ENCODE measurements at regions of chr5 and their contacts with region 1.

Region 1: GRCh38 chr5:42950440-42951292 is 89.5 kb downstream of the ANXA2R start:
- DNase-seq: peak; percentile 72
- ATAC-seq: peak; percentile 88 to 91
- H3K4me3 ChIP-seq: peak overlapping the region; percentile 56
- H3K27ac ChIP-seq: peak overlapping the region; percentile 94
- H3K4me1 ChIP-seq: peaks cover 32% of the 10 kb centered on the region
- H3K27me3 ChIP-seq: peaks cover 87% of the 10 kb centered on the region
- CTCF ChIP-seq: no peak

Region 2: GRCh38 chr5:42756606-42757601 is 193.8 kb before region 1 on chr5 and contains the start of gene CCDC152:
- intact Hi-C with region 1: no loop called
- DNase-seq: no peak
- ATAC-seq: peak; percentile 16 to 51
- H3K4me3 ChIP-seq: peak within 1 kb of the TSS; percentile 44
- H3K27ac ChIP-seq: no peak within 1 kb of the TSS
- H3K4me1 ChIP-seq: peaks cover 7% of the 10 kb centered on the region
- H3K27me3 ChIP-seq: peaks cover 3% of the 10 kb centered on the region
- CTCF ChIP-seq: no peak
- total RNA-seq, gene CCDC152: 1.3 TPM

Region 3: DNA sequence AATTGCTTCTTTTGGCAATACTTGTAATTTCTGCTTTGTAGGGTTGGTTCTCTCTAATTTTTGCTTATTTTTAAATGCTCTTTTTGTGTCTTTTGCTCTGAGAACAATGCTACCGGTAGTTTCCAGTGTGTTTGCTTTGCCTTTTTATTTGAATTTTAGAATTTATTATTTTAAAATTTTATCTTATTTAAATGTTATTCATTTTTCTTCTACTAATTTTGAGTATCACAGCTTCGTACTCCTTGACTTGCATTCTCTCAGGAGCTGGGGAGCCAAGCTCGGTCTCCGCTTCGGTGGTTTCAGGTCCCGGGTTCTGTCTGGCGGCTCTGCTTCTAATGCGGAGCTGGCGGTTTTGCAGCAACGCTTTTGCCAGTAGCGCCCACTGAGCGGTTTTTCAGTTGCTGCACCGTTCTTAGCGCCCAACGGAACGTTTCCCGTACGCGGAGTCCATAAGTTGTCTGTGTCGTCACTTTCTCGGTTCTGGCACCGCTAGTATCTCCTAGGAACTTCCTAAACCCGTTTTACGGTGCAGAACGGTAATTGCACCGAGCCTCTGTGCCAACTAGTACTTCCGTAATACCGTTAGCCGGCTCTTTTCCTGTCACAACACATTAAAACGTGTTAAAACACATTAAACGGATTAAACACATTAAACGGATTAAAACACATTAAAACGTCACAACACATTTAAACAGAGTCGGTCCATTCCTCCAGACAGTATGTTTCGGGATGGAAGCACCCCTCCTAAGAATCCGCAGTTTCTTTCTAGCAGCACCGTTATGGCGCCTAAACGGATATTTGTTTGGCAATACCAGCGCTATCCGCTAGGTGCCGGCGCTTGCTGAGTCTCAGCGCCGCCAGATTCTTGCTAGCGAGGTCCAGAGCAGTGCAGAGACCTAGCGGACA is 43.8 kb after region 1 on chr5:
- intact Hi-C with region 1: loop called (anchors 5 kb)
- DNase-seq: peak; percentile 89
- ATAC-seq: peak; percentile 84 to 87
- H3K4me3 ChIP-seq: peak overlapping the region; percentile 58
- H3K27ac ChIP-seq: peak overlapping the region; percentile 99
- H3K4me1 ChIP-seq: peaks cover 17% of the 10 kb centered on the region
- H3K27me3 ChIP-seq: peaks cover 86% of the 10 kb centered on the region
- CTCF ChIP-seq: peak; percentile 88

Region 4: GRCh38 chr5:43066799-43067741 is 116.4 kb after region 1 on chr5:
- intact Hi-C with region 1: no loop called
- DNase-seq: peak; percentile 88
- ATAC-seq: peak; percentile 83 to 85
- H3K4me3 ChIP-seq: peak overlapping the region; percentile 67
- H3K27ac ChIP-seq: peak overlapping the region; percentile 100
- H3K4me1 ChIP-seq: peaks cover 36% of the 10 kb centered on the region
- H3K27me3 ChIP-seq: no peaks in the 10 kb centered on the region
- CTCF ChIP-seq: no peak

Measured in lower lobe of right lung (tissue), 2 donors.